ENCODE measurements at regions of chr2 and their contacts with region 1.

Region 1: GRCh38 chr2:126212735-126213134 is 443.2 kb upstream of the GYPC start:
- DNase-seq: no peak
- ATAC-seq: no peak
- H3K4me3 ChIP-seq: no peak overlapping the region
- H3K4me3 Mint-ChIP-seq: no peak overlapping the region
- H3K27ac ChIP-seq: no peak overlapping the region
- H3K27ac Mint-ChIP-seq: no peak overlapping the region
- H3K4me1 ChIP-seq: no peaks in the 10 kb centered on the region
- H3K4me1 Mint-ChIP-seq: no peaks in the 10 kb centered on the region
- H3K27me3 ChIP-seq: no peaks in the 10 kb centered on the region
- H3K27me3 Mint-ChIP-seq: no peaks in the 10 kb centered on the region
- CTCF ChIP-seq: no peak

Region 2: DNA sequence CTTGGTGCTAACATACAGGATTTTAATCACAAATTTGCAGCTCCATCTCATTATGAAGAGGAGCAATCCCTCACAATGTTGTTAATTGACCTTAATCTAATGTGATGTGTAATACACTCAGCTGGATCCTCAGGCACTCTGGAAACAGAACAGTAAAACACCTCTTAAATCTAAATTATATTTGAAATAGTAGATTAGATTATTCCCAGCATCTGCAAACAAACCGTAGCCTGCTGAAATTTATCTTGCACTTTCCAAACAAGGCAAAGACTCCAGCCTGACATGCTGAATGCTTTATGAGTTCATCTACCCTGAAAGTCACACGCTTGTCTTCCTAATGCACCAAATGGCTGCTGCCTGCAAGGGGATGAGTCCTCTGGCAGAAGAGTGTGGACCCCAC is 40.9 kb after region 1 on chr2:
- CTCF ChIA-PET with region 1: no interaction called
- POLR2A ChIA-PET with region 1: no interaction called
- intact Hi-C with region 1: loop called in 1 of 2 experiments (anchors 2 kb)
- DNase-seq: no peak
- ATAC-seq: no peak
- H3K4me3 ChIP-seq: no peak overlapping the region
- H3K4me3 Mint-ChIP-seq: no peak overlapping the region
- H3K27ac ChIP-seq: no peak overlapping the region
- H3K27ac Mint-ChIP-seq: no peak overlapping the region
- H3K4me1 ChIP-seq: no peaks in the 10 kb centered on the region
- H3K4me1 Mint-ChIP-seq: no peaks in the 10 kb centered on the region
- H3K27me3 ChIP-seq: no peaks in the 10 kb centered on the region
- H3K27me3 Mint-ChIP-seq: no peaks in the 10 kb centered on the region
- CTCF ChIP-seq: no peak

Measured in CD4-positive, alpha-beta T cell (primary cell).